ENCODE measurements at regions of chr5 and their contacts with region 1.

Region 1: GRCh38 chr5:107437986-107438520 is 232.7 kb downstream of the EFNA5 start:
- DNase-seq: no peak
- H3K4me3 ChIP-seq: no peak overlapping the region
- H3K27ac ChIP-seq: no peak overlapping the region
- H3K4me1 ChIP-seq: peaks cover 24% of the 10 kb centered on the region
- CTCF ChIP-seq: no peak

Region 2: DNA sequence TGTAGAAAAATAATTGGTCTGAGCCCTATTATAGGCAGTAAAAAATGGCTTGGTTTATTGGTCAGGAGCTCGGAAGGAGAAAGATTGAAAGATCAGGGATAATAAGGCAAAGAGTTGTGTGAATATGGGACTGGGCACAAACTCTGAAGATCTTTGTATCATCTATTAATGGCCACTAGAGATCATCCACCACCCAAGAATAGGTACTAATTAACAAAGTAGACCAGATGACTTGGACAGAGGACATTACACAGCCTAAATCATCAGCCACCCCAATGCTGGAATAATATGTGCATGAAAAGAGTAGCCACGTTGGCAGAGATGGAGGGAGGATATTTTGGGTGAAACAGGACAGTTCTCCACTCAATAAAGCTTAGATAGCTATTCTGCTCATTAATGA is 131.5 kb before region 1 on chr5:
- CTCF ChIA-PET with region 1: no interaction called
- POLR2A ChIA-PET with region 1: no interaction called
- intact Hi-C with region 1: no loop called
- DNase-seq: peak; percentile 13
- H3K4me3 ChIP-seq: no peak overlapping the region
- H3K27ac ChIP-seq: no peak overlapping the region
- H3K4me1 ChIP-seq: peaks cover 18% of the 10 kb centered on the region
- CTCF ChIP-seq: no peak

Region 3: DNA sequence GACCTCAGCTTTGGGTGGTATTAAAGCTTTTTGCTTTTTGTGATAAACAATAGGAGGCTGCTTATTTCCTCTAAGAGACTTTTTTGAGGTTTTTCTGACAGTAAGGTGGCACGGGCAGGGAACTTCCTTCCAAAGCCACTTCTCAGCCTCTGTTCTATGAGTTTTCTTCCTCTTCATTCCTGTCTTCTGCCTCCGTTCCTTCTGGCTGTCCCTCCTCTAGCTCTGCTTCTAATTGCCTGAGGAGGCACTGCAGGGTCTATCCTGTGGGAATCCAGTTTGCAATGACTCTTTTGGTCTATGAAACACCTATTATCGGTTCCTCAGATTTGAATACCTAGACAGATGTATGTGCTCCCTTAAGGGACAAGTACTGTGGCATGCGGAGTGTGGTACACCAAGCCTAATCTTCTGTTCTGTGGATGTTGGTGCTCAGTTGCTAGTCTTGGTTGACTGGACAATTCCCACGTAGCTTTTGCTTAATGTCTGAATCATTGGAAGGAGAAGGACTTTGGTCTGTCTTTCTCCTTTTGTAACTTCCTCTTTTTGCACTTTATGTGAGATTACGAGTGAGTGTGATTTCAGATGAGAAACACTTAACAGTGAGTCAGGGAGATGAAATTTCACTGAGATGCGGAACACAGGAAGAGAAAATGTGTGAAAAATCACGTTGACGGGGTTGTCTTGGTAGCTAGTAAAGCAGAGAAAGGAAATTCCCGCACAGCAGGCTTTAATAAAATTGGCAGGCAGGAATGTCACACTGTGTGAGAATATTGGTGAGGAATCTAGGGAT is 72.5 kb before region 1 on chr5:
- CTCF ChIA-PET with region 1: no interaction called
- POLR2A ChIA-PET with region 1: no interaction called
- intact Hi-C with region 1: no loop called
- DNase-seq: peak; percentile 40
- H3K4me3 ChIP-seq: no peak overlapping the region
- H3K27ac ChIP-seq: no peak overlapping the region
- H3K4me1 ChIP-seq: peaks cover 33% of the 10 kb centered on the region
- CTCF ChIP-seq: no peak

Region 4: DNA sequence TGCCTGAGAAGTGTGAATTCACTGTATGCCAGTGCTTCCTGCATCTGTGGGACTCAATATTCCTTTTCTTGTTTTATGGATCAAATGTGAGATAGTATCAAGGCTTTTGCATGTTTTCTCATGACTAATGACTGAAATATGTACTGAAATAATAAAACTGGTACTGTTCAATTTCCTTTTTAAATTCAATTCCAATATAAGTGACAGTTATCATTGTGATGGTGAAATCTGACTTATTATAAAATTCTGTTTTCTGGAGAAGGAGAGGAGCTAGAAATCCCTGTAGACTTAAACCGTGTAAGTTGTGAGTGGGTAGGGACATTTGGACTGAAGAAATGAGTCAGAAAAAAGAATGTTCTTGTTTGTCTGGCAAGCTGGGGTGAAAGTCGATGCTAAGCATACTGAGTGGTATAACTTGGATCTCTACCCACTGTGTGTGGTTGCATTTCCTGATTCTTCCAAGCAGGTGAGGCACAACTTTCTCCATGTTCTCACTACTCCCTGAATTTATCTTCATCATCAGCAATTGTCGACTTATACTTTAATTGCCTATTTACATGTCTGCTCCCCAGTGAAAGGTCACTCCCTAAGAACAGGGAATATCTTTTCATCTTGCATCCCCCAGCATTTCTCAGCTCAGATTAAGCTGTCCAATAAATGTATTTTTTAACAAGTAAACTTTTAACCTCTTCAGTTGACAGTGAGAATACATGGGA is 12.4 kb before region 1 on chr5:
- CTCF ChIA-PET with region 1: interaction called, 3 read pairs
- POLR2A ChIA-PET with region 1: interaction called, 22 read pairs
- intact Hi-C with region 1: no loop called
- DNase-seq: no peak
- H3K4me3 ChIP-seq: no peak overlapping the region
- H3K27ac ChIP-seq: no peak overlapping the region
- H3K4me1 ChIP-seq: peaks cover 20% of the 10 kb centered on the region
- CTCF ChIP-seq: no peak

Region 5: GRCh38 chr5:107449369-107449768 is 11.3 kb after region 1 on chr5:
- CTCF ChIA-PET with region 1: no interaction called
- POLR2A ChIA-PET with region 1: interaction called, 27 read pairs
- intact Hi-C with region 1: no loop called
- DNase-seq: peak; percentile 65
- H3K4me3 ChIP-seq: peak overlapping the region; percentile 35
- H3K27ac ChIP-seq: peak overlapping the region; percentile 63
- H3K4me1 ChIP-seq: peaks cover 48% of the 10 kb centered on the region
- CTCF ChIP-seq: no peak

Region 6: GRCh38 chr5:107456281-107456715 is 18.2 kb after region 1 on chr5:
- CTCF ChIA-PET with region 1: no interaction called
- POLR2A ChIA-PET with region 1: interaction called, 27 read pairs
- intact Hi-C with region 1: no loop called
- DNase-seq: no peak
- H3K4me3 ChIP-seq: no peak overlapping the region
- H3K27ac ChIP-seq: no peak overlapping the region
- H3K4me1 ChIP-seq: peaks cover 55% of the 10 kb centered on the region
- CTCF ChIP-seq: no peak

Region 7: GRCh38 chr5:107724642-107725041 is 286.6 kb after region 1 on chr5:
- CTCF ChIA-PET with region 1: no interaction called
- POLR2A ChIA-PET with region 1: no interaction called
- intact Hi-C with region 1: no loop called
- DNase-seq: no peak
- H3K4me3 ChIP-seq: no peak overlapping the region
- H3K27ac ChIP-seq: no peak overlapping the region
- H3K4me1 ChIP-seq: no peaks in the 10 kb centered on the region
- CTCF ChIP-seq: no peak

Measured in OCI-LY7 (cell line).